ENCODE measurements at regions of chr5 and their contacts with region 1.

Region 1: GRCh38 chr5:89584339-89584956 is 701.5 kb upstream of the MEF2C start:
- DNase-seq: no peak
- ATAC-seq: no peak
- H3K4me3 ChIP-seq: no peak overlapping the region
- H3K4me3 Mint-ChIP-seq: no peak overlapping the region
- H3K27ac ChIP-seq: no peak overlapping the region
- H3K27ac Mint-ChIP-seq: no peak overlapping the region
- H3K4me1 ChIP-seq: peaks cover 10 to 11% of the 10 kb centered on the region in 2 donors
- H3K4me1 Mint-ChIP-seq: peaks cover 10% of the 10 kb centered on the region
- H3K27me3 ChIP-seq: no peaks in the 10 kb centered on the region
- H3K27me3 Mint-ChIP-seq: no peaks in the 10 kb centered on the region
- CTCF ChIP-seq: no peak

Region 2: DNA sequence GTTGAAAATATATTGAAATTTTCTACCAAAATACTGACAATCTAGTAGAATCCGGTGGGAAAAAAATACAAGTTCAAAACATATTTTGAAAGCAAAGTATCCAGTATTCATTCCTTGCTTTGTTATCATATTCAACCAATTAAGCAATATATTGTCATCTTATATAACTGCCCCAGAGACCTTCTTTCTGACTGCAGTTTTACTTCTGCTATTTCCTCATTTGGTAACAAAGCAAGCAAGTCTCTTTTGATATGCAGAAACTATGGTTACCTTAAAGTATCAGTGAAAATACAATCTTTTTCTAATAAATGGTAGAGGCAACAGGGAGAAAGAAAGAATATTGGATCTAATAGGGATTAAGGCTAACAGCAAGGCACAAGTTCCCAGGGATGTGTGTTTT is 37.8 kb before region 1 on chr5:
- CTCF ChIA-PET with region 1: no interaction called
- POLR2A ChIA-PET with region 1: no interaction called
- intact Hi-C with region 1: loop called (anchors 5 kb)
- DNase-seq: peak; percentile 31
- ATAC-seq: no peak
- H3K4me3 ChIP-seq: no peak overlapping the region
- H3K4me3 Mint-ChIP-seq: no peak overlapping the region
- H3K27ac ChIP-seq: no peak overlapping the region
- H3K27ac Mint-ChIP-seq: no peak overlapping the region
- H3K4me1 ChIP-seq: peaks cover 0 to 13% of the 10 kb centered on the region in 2 donors
- H3K4me1 Mint-ChIP-seq: peaks cover 8% of the 10 kb centered on the region
- H3K27me3 ChIP-seq: no peaks in the 10 kb centered on the region
- H3K27me3 Mint-ChIP-seq: no peaks in the 10 kb centered on the region
- CTCF ChIP-seq: no peak

Measured in B cell (primary cell).